ENCODE measurements at regions of chr12 and their contacts with region 1.

Region 1: GRCh38 chr12:49842519-49843352 is at the start of gene BCDIN3D:
- DNase-seq: peak; percentile 66
- ATAC-seq: peak; percentile 97
- H3K4me3 ChIP-seq: peak within 1 kb of the TSS; percentile 98
- H3K27ac ChIP-seq: peak within 1 kb of the TSS; percentile 76
- H3K4me1 ChIP-seq: peaks cover 10% of the 10 kb centered on the region; the same call in 1 of the 2 replicates
- H3K27me3 ChIP-seq: no peaks in the 10 kb centered on the region
- CTCF ChIP-seq: no peak
- EP300 ChIP-seq: no peak
- POLR2A ChIP-seq: peak; percentile 94
- RAD21 ChIP-seq: no peak
- polyA plus RNA-seq, gene BCDIN3D: 5.5 to 6.3 TPM

Region 2: DNA sequence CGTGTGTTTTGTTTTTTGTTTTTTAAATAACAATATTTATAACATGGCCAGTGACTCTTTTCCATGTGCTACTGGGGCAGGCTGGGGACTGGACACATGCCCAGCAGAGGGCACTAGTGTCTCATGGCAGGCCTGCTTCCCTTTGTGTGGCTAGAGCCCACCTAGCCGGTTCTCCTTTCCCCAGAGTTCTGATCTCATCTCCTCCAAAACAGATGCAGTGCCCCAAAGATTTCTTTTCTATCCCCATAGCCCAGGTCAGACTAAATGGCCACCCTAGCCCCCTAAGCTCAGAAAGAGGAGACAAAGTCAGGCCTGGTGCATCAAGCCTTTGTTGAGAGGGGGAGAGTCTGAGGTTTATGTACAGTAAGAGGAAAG is 198.1 kb before region 1 on chr12:
- CTCF ChIA-PET with region 1: interaction called, 3 read pairs
- POLR2A ChIA-PET with region 1: no interaction called
- RAD21 ChIA-PET with region 1: interaction called, 3 read pairs
- SMC1A ChIA-PET with region 1: interaction called, 4 read pairs
- in situ Hi-C with region 1: loop called (anchors 10 kb)
- intact Hi-C with region 1: loop called (anchors 10 kb)
- DNase-seq: peak; percentile 27
- ATAC-seq: peak; percentile 96
- H3K4me3 ChIP-seq: no peak overlapping the region
- H3K27ac ChIP-seq: peak overlapping the region; percentile 28; the same call in 1 of the 2 replicates
- H3K4me1 ChIP-seq: no peaks in the 10 kb centered on the region
- H3K27me3 ChIP-seq: no peaks in the 10 kb centered on the region
- CTCF ChIP-seq: peak; percentile 90 to 95 (median 91)
- EP300 ChIP-seq: no peak
- POLR2A ChIP-seq: no peak
- RAD21 ChIP-seq: peak; percentile 96

Region 3: GRCh38 chr12:49740930-49741881 is 101.5 kb before region 1 on chr12 and contains the start of gene TMBIM6:
- CTCF ChIA-PET with region 1: interaction called, 65 read pairs
- POLR2A ChIA-PET with region 1: interaction called, 9 read pairs
- RAD21 ChIA-PET with region 1: interaction called, 19 read pairs
- SMC1A ChIA-PET with region 1: interaction called, 20 read pairs
- in situ Hi-C with region 1: no loop called
- intact Hi-C with region 1: no loop called
- DNase-seq: peak; percentile 99
- ATAC-seq: peak; percentile 96
- H3K4me3 ChIP-seq: peak within 1 kb of the TSS; percentile 77
- H3K27ac ChIP-seq: peak within 1 kb of the TSS; percentile 96
- H3K4me1 ChIP-seq: 0 out of 2 replicates have a peak, but pooled peaks cover 2% of the 10 kb centered on the region
- H3K27me3 ChIP-seq: no peaks in the 10 kb centered on the region
- CTCF ChIP-seq: peak; percentile 91 to 99 (median 98)
- EP300 ChIP-seq: no peak
- POLR2A ChIP-seq: peak; percentile 98
- RAD21 ChIP-seq: peak; percentile 80
- polyA plus RNA-seq, gene TMBIM6: 853 to 1,192 TPM

Region 4: GRCh38 chr12:49763006-49763591 is 79.6 kb before region 1 on chr12:
- CTCF ChIA-PET with region 1: interaction called, 15 read pairs
- POLR2A ChIA-PET with region 1: no interaction called
- RAD21 ChIA-PET with region 1: interaction called, 3 read pairs
- SMC1A ChIA-PET with region 1: interaction called, 15 read pairs
- in situ Hi-C with region 1: no loop called
- intact Hi-C with region 1: no loop called
- DNase-seq: no peak
- ATAC-seq: peak; percentile 85
- H3K4me3 ChIP-seq: no peak overlapping the region
- H3K27ac ChIP-seq: peak overlapping the region; percentile 30
- H3K4me1 ChIP-seq: peaks cover 26% of the 10 kb centered on the region
- H3K27me3 ChIP-seq: no peaks in the 10 kb centered on the region
- CTCF ChIP-seq: peak; percentile 59 to 88 (median 82)
- EP300 ChIP-seq: no peak
- POLR2A ChIP-seq: no peak
- RAD21 ChIP-seq: peak; percentile 47

Region 5: GRCh38 chr12:49783917-49784676 is 58.6 kb before region 1 on chr12:
- CTCF ChIA-PET with region 1: interaction called, 122 read pairs
- POLR2A ChIA-PET with region 1: no interaction called
- RAD21 ChIA-PET with region 1: interaction called, 49 read pairs
- SMC1A ChIA-PET with region 1: interaction called, 56 read pairs
- in situ Hi-C with region 1: loop called (anchors 5 kb)
- intact Hi-C with region 1: no loop called
- DNase-seq: no peak
- ATAC-seq: peak; percentile 47; the same call in 2 of the 3 replicates
- H3K4me3 ChIP-seq: no peak overlapping the region
- H3K27ac ChIP-seq: no peak overlapping the region
- H3K4me1 ChIP-seq: no peaks in the 10 kb centered on the region
- H3K27me3 ChIP-seq: no peaks in the 10 kb centered on the region; a peak in 1 of 4 replicates
- CTCF ChIP-seq: no peak
- EP300 ChIP-seq: no peak
- POLR2A ChIP-seq: no peak
- RAD21 ChIP-seq: no peak

Measured in GM12878 (cell line).